ENCODE measurements at regions of chr17 and their contacts with region 1.

Region 1: DNA sequence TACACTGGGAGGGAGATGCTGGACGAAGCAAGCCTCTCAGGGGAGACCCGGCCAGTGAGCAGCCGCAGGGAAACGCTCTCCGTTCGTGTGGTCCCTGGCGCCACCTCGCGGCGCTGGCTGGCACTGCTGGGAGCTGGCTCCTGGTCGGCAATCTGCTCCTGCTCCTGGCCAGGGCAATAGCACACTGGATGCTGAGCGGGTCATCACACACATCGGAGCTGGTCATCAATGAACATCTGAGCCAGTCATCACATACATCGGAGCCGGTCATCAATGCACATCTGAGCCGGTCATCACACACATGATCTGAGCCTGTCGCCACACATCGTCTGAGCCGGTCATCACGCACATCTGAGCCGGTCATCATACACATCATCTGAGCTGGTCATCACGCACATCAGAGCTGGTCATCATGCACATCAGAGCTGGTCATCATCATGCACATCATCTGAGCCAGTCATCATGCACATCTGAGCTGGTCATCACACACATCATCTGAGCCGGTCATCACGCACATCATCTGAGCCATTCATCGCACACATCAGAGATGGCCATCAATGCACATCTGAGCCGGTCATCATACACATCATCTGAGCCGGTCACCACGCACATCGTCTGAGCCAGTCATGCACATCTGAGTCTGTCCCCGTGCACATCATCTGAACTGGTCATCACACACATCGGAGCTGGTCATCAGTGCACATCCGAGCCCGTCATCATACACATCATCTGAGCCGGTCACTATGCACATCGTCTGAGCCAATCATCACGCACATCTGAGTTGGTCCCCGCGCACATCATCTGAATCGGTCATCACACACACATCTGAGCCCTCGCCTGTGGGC is 217.3 kb downstream of the RBFOX3 start:
- DNase-seq: peak; percentile 76
- H3K4me3 ChIP-seq: no peak overlapping the region
- H3K27ac ChIP-seq: no peak overlapping the region
- H3K4me1 ChIP-seq: no peaks in the 10 kb centered on the region
- H3K27me3 ChIP-seq: peaks cover 12% of the 10 kb centered on the region
- CTCF ChIP-seq: peak; percentile 89

Region 2: DNA sequence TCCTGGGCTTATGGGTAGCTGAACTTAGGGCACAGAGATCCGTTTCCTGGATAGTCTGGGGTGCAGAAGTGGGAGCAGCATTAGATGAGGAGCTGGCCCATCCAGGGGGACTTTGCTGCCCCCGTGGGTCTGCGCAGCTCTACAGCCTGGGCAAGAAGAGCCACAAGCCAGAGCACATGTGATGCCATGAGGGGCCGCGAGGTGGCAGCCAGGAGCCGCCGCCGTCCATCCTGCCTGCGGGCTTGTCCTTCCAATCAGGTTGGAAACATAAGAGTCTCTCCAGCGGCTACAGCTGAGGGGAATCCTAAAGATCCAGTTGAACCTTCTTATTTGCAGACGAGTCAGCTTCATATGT is 347.8 kb before region 1 on chr17:
- intact Hi-C with region 1: loop called (anchors 2 kb)
- DNase-seq: peak; percentile 78
- H3K4me3 ChIP-seq: no peak overlapping the region
- H3K27ac ChIP-seq: no peak overlapping the region
- H3K4me1 ChIP-seq: no peaks in the 10 kb centered on the region
- H3K27me3 ChIP-seq: no peaks in the 10 kb centered on the region
- CTCF ChIP-seq: peak; percentile 91

Region 3: GRCh38 chr17:79087428-79088143 is 306.0 kb before region 1 on chr17:
- intact Hi-C with region 1: loop called (anchors 2 kb)
- DNase-seq: peak; percentile 78
- H3K4me3 ChIP-seq: no peak overlapping the region
- H3K27ac ChIP-seq: no peak overlapping the region
- H3K4me1 ChIP-seq: no peaks in the 10 kb centered on the region
- H3K27me3 ChIP-seq: no peaks in the 10 kb centered on the region
- CTCF ChIP-seq: peak; percentile 96

Region 4: GRCh38 chr17:79188048-79188447 is 205.5 kb before region 1 on chr17:
- intact Hi-C with region 1: loop called (anchors 2 kb)
- DNase-seq: no peak
- H3K4me3 ChIP-seq: no peak overlapping the region
- H3K27ac ChIP-seq: no peak overlapping the region
- H3K4me1 ChIP-seq: no peaks in the 10 kb centered on the region
- H3K27me3 ChIP-seq: peaks cover 14% of the 10 kb centered on the region
- CTCF ChIP-seq: peak; percentile 33